ENCODE measurements at regions of chr3 and their contacts with region 1.

Region 1: GRCh38 chr3:162973518-162973917 is 1476.9 kb downstream of the OTOL1 start:
- DNase-seq: no peak
- ATAC-seq: no peak

Region 2: GRCh38 chr3:162956711-162957110 is 16.8 kb before region 1 on chr3:
- intact Hi-C with region 1: loop called in 1 of 2 experiments (anchors 1 kb)
- DNase-seq: no peak
- ATAC-seq: no peak